ENCODE measurements at regions of chr3 and their contacts with region 1.

Region 1: GRCh38 chr3:31369637-31370379 is 162.9 kb upstream of the STT3B start:
- DNase-seq: peak in 1 of 2 experiments; percentile 20
- H3K4me3 ChIP-seq: no peak overlapping the region
- H3K4me3 Mint-ChIP-seq: no peak overlapping the region
- H3K27ac Mint-ChIP-seq: peak overlapping the region; percentile 80
- H3K4me1 ChIP-seq: peaks cover 38% of the 10 kb centered on the region
- H3K4me1 Mint-ChIP-seq: peaks cover 27% of the 10 kb centered on the region
- H3K27me3 ChIP-seq: no peaks in the 10 kb centered on the region
- H3K27me3 Mint-ChIP-seq: no peaks in the 10 kb centered on the region
- CTCF ChIP-seq: no peak

Region 2: GRCh38 chr3:31307131-31307785 is 62.5 kb before region 1 on chr3:
- CTCF ChIA-PET with region 1: no interaction called
- POLR2A ChIA-PET with region 1: no interaction called
- intact Hi-C with region 1: loop called (anchors 2 kb)
- DNase-seq: no peak
- H3K4me3 ChIP-seq: no peak overlapping the region
- H3K4me3 Mint-ChIP-seq: no peak overlapping the region
- H3K27ac Mint-ChIP-seq: no peak overlapping the region
- H3K4me1 ChIP-seq: peaks cover 32% of the 10 kb centered on the region
- H3K4me1 Mint-ChIP-seq: peaks cover 12% of the 10 kb centered on the region
- H3K27me3 ChIP-seq: no peaks in the 10 kb centered on the region
- H3K27me3 Mint-ChIP-seq: no peaks in the 10 kb centered on the region
- CTCF ChIP-seq: no peak

Region 3: GRCh38 chr3:31343075-31343474 is 26.7 kb before region 1 on chr3:
- CTCF ChIA-PET with region 1: no interaction called
- POLR2A ChIA-PET with region 1: no interaction called
- intact Hi-C with region 1: no loop called
- DNase-seq: no peak
- H3K4me3 ChIP-seq: no peak overlapping the region
- H3K4me3 Mint-ChIP-seq: no peak overlapping the region
- H3K27ac Mint-ChIP-seq: no peak overlapping the region
- H3K4me1 ChIP-seq: no peaks in the 10 kb centered on the region
- H3K4me1 Mint-ChIP-seq: peaks cover 8% of the 10 kb centered on the region
- H3K27me3 ChIP-seq: no peaks in the 10 kb centered on the region
- H3K27me3 Mint-ChIP-seq: no peaks in the 10 kb centered on the region
- CTCF ChIP-seq: no peak

Region 4: GRCh38 chr3:31356941-31357340 is 12.9 kb before region 1 on chr3:
- CTCF ChIA-PET with region 1: no interaction called
- POLR2A ChIA-PET with region 1: interaction called, 3 read pairs
- intact Hi-C with region 1: loop called (anchors 1 kb)
- DNase-seq: no peak
- H3K4me3 ChIP-seq: no peak overlapping the region
- H3K4me3 Mint-ChIP-seq: no peak overlapping the region
- H3K27ac Mint-ChIP-seq: peak overlapping the region; percentile 81
- H3K4me1 ChIP-seq: peaks cover 31% of the 10 kb centered on the region
- H3K4me1 Mint-ChIP-seq: peaks cover 14% of the 10 kb centered on the region
- H3K27me3 ChIP-seq: no peaks in the 10 kb centered on the region
- H3K27me3 Mint-ChIP-seq: no peaks in the 10 kb centered on the region
- CTCF ChIP-seq: no peak

Region 5: DNA sequence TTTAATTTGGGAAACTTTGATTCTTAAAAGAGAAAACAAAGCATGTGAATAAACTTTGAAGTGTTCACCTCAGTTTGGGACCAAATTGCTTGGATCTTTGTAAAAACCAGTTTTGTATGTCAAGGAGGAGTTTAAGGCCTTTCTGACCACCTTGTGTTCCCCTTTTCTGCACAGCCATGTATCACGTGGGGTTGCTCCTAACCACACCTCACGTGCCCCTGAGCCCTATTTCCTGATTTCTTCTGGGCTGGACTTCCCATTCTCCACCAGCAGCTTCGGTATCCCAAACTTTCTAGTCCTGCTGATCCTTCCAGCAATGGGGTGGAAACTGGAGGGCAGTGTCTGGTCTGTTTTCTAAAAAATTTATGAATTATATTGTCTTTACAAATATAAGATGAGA is 86.6 kb after region 1 on chr3:
- CTCF ChIA-PET with region 1: no interaction called
- POLR2A ChIA-PET with region 1: no interaction called
- intact Hi-C with region 1: no loop called
- DNase-seq: no peak
- H3K4me3 ChIP-seq: no peak overlapping the region
- H3K4me3 Mint-ChIP-seq: no peak overlapping the region
- H3K27ac Mint-ChIP-seq: no peak overlapping the region
- H3K4me1 ChIP-seq: no peaks in the 10 kb centered on the region
- H3K4me1 Mint-ChIP-seq: no peaks in the 10 kb centered on the region
- H3K27me3 ChIP-seq: no peaks in the 10 kb centered on the region
- H3K27me3 Mint-ChIP-seq: no peaks in the 10 kb centered on the region
- CTCF ChIP-seq: no peak

Region 6: GRCh38 chr3:31531992-31532586 is 162.3 kb after region 1 on chr3:
- CTCF ChIA-PET with region 1: interaction called, 4 read pairs
- POLR2A ChIA-PET with region 1: interaction called, 13 read pairs
- intact Hi-C with region 1: loop called (anchors 1 kb)
- DNase-seq: peak; percentile 99
- H3K4me3 ChIP-seq: peak overlapping the region; percentile 97
- H3K4me3 Mint-ChIP-seq: peak overlapping the region; percentile 89
- H3K27ac Mint-ChIP-seq: peak overlapping the region; percentile 98
- H3K4me1 ChIP-seq: peaks cover 19% of the 10 kb centered on the region
- H3K4me1 Mint-ChIP-seq: peaks cover 12% of the 10 kb centered on the region
- H3K27me3 ChIP-seq: no peaks in the 10 kb centered on the region
- H3K27me3 Mint-ChIP-seq: no peaks in the 10 kb centered on the region
- CTCF ChIP-seq: no peak